PC-9 (cell line): ENCODE measurements at regions of chr1 and their contacts with region 1.

Region 1: GRCh38 chr1:67535474-67535873 is 105.3 kb upstream of the SERBP1 start:
- DNase-seq: peak; percentile 69 to 88
- H3K4me3 ChIP-seq: no peak overlapping the region
- H3K27ac ChIP-seq: no peak overlapping the region
- H3K4me1 ChIP-seq: peaks cover 12% of the 10 kb centered on the region; the same call in 1 of the 2 replicates
- H3K27me3 ChIP-seq: no peaks in the 10 kb centered on the region
- CTCF ChIP-seq: peak; percentile 97

Region 2: GRCh38 chr1:66890621-66891020 is 644.9 kb before region 1 on chr1:
- CTCF ChIA-PET with region 1: no interaction called
- POLR2A ChIA-PET with region 1: no interaction called
- intact Hi-C with region 1: no loop called
- DNase-seq: no peak
- H3K4me3 ChIP-seq: no peak overlapping the region
- H3K27ac ChIP-seq: no peak overlapping the region
- H3K4me1 ChIP-seq: no peaks in the 10 kb centered on the region
- H3K27me3 ChIP-seq: no peaks in the 10 kb centered on the region
- CTCF ChIP-seq: no peak

Region 3: GRCh38 chr1:67561704-67562113 is 26.2 kb after region 1 on chr1:
- CTCF ChIA-PET with region 1: interaction called, 4 read pairs
- POLR2A ChIA-PET with region 1: interaction called, 3 read pairs
- intact Hi-C with region 1: loop called (anchors 1 kb)
- DNase-seq: peak; percentile 97
- H3K4me3 ChIP-seq: peak overlapping the region; percentile 38; the same call in 1 of the 2 replicates
- H3K27ac ChIP-seq: peak overlapping the region; percentile 85
- H3K4me1 ChIP-seq: peaks cover 20% of the 10 kb centered on the region
- H3K27me3 ChIP-seq: no peaks in the 10 kb centered on the region
- CTCF ChIP-seq: peak; percentile 99

Region 4: DNA sequence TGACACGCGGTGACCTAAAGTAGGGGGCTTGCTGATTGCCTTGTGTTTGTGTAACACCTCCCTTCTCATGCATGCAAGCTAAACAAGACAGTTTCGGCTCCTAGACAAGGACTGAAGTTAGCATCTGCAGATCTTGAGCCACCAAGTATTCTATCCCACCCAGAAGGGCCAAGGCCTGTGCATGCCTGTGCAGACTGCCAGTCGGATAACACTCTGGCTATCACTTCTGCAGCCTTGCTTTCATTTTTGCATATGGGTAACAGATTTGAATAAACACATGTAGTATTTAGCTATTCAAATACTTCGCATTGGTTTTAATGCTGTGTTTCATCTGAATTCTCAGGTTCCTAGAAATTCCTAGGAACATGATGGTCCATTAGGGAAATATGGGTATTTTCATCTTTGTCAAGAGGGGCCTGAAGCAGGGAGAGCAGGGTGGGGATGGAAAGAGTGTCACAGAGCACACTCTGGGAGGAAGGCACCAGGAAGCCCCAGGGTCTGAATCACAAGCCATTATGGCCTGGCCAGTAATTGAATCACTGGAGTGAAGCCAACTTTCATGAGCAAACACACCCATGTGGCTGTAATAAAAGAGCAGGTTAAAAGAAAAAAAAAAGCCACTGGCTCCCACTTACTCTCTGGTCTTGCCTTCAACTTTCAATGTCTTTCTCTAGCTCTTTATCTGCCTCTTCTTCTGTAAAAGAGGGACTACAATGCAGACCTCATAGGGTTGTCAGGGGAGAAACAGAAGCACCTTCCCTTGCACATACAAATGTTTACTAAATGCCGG is 177.8 kb after region 1 on chr1:
- CTCF ChIA-PET with region 1: interaction called, 15 read pairs
- POLR2A ChIA-PET with region 1: no interaction called
- intact Hi-C with region 1: no loop called
- DNase-seq: peak; percentile 70 to 92
- H3K4me3 ChIP-seq: no peak overlapping the region
- H3K27ac ChIP-seq: peak overlapping the region; percentile 70
- H3K4me1 ChIP-seq: peaks cover 44% of the 10 kb centered on the region
- H3K27me3 ChIP-seq: no peaks in the 10 kb centered on the region
- CTCF ChIP-seq: no peak

Region 5: GRCh38 chr1:67760030-67760821 is 224.8 kb after region 1 on chr1:
- CTCF ChIA-PET with region 1: interaction called, 31 read pairs
- POLR2A ChIA-PET with region 1: interaction called, 5 read pairs
- intact Hi-C with region 1: loop called (anchors 1 kb)
- DNase-seq: peak; percentile 63 to 71
- H3K4me3 ChIP-seq: no peak overlapping the region
- H3K27ac ChIP-seq: 0 out of 2 replicates have a peak overlapping the region, but pooled peaks have one; percentile 4
- H3K4me1 ChIP-seq: peaks cover 12% of the 10 kb centered on the region
- H3K27me3 ChIP-seq: no peaks in the 10 kb centered on the region
- CTCF ChIP-seq: peak; percentile 99

Region 6: DNA sequence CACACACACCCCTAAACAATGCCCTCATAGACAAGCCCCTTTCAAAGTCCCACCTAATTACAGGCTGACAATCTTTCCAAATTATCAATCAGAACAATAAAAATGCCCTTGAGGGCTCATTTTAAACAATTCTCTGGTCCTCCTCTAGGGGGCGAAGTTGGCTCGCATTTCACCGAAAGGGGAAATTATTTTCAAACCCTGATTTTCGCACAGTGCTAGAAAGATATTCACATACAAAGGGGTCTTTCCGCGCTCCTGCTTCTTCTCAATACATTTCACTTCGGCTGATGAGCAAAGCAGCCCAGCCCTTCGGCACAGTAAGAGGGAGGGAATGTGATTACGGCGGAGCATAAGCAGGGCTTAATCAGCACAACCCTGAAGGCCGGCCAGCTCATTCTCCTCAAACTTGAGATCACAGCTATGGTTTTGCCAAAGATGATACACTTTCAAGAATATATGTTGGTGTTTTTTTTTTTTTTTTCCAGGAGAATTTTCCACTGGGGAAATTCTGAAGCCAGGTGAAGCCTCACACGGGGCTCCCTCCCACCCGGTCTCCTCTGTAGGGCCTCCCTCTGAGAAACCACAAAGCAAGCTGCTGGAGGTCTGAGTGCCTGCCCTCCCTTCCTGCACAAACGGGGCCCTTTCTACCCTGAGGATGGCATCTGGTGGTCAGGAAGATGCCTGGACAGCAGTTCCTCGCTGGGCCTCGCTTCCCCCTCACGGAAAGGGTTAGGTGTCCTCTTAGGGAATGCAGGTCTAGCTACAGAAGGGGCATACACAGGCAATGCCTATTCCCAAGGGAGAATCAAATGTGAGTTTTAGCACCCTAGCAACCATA is 230.9 kb after region 1 on chr1:
- CTCF ChIA-PET with region 1: interaction called, 11 read pairs
- POLR2A ChIA-PET with region 1: no interaction called
- intact Hi-C with region 1: no loop called
- DNase-seq: peak in 1 of 2 experiments; percentile 44
- H3K4me3 ChIP-seq: no peak overlapping the region
- H3K27ac ChIP-seq: no peak overlapping the region
- H3K4me1 ChIP-seq: no peaks in the 10 kb centered on the region
- H3K27me3 ChIP-seq: no peaks in the 10 kb centered on the region
- CTCF ChIP-seq: peak; percentile 99

Region 7: DNA sequence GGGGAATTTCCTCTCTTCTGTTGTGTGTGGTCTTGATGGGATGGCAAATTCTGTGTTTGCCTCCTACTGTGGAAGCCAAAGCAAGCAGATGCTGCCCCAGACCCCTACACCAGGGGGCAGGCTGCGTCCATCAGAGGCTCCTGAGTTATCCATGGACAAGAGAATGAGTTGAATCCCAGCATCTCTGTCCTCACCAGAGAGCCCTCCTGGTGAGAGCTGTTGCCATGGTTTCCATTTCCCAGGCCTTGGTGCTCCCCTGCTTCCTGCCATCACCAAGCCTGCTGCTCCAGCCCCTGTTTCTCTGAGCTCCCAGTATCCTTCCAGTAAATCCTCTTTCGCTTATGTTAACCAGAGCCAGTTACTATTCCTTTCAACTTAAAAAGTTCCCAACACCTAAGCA is 318.2 kb after region 1 on chr1:
- CTCF ChIA-PET with region 1: no interaction called
- POLR2A ChIA-PET with region 1: no interaction called
- intact Hi-C with region 1: loop called (anchors 1 kb)
- DNase-seq: peak; percentile 48 to 64
- H3K4me3 ChIP-seq: no peak overlapping the region
- H3K27ac ChIP-seq: no peak overlapping the region
- H3K4me1 ChIP-seq: peaks cover 11% of the 10 kb centered on the region
- H3K27me3 ChIP-seq: no peaks in the 10 kb centered on the region
- CTCF ChIP-seq: peak; percentile 93

Region 8: DNA sequence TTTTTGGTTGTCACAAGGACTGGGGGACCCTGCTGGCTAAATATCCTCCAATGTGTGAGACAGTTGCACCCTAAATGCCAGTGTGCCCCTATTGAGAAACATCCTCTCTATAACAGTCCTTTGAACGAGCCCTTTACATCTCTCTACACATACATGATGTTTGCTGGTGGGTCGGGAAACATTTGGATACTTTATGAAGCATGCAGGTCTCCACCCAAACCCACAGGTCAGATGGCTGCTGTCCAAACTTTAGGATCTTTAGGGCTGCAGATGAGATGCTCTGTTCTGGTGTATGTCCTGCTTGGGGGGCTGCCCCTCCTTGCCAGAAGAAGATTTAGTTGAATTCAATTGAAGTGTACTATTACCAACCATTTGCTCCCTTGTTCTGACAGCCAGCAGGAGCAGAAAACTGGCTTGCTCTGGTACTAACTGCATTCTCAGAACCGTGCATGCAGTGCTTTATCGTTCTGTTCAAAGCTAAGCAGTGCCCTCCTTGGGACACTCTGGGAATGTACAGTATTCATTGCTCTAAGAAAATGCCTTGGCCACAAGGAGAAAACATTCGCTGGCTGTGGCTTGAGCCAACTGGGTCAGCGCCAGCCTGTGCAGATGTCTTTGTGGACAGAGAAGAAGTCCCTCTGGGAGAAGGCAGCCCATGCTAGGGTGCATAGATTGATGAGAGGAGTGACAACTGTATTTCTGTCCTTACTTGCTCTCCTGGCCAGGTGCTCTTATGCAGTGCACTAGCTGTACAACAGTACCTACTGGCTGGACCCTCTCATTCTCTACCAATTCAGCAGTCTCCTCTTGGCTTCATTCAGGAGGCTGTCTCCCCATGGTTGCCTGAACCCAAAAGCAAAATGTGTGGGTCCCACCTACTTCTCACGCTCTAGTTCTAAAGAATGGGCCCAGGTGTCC is 576.3 kb after region 1 on chr1:
- CTCF ChIA-PET with region 1: no interaction called
- POLR2A ChIA-PET with region 1: no interaction called
- intact Hi-C with region 1: loop called (anchors 1 kb)
- DNase-seq: peak; percentile 46 to 50
- H3K4me3 ChIP-seq: no peak overlapping the region
- H3K27ac ChIP-seq: no peak overlapping the region
- H3K4me1 ChIP-seq: no peaks in the 10 kb centered on the region
- H3K27me3 ChIP-seq: no peaks in the 10 kb centered on the region
- CTCF ChIP-seq: peak; percentile 73